Lower leg skin (tissue), 4 donors: ENCODE measurements at regions of chr2 and their contacts with region 1.

Region 1: DNA sequence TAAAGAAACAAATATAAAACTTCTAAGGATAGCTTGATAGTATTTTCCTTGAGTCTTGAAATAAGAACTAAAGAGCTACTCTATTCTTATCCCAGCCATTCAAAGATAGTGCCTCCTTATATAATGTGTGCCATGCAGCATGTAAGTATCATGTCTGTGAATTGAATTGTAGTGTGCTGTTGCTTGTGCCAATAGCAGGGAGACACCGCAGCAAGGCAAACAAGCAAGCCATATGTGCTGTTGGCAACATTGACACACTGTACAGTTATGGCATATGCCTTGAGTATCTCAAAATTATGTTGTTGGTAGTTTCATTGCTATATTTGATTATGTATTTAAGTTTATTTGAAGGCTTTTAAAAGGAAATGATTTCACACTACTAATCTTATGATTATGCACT is 58.2 kb downstream of the ERBB4 start:
- DNase-seq: no peak
- H3K4me3 ChIP-seq: no peak overlapping the region
- CTCF ChIP-seq: no peak
- POLR2A ChIP-seq: no peak

Region 2: GRCh38 chr2:212530373-212530772 is 49.9 kb after region 1 on chr2:
- intact Hi-C with region 1: loop called (anchors 2 kb)
- DNase-seq: no peak
- H3K4me3 ChIP-seq: no peak overlapping the region
- CTCF ChIP-seq: no peak
- POLR2A ChIP-seq: no peak

Region 3: GRCh38 chr2:212974692-212975091 is 494.2 kb after region 1 on chr2:
- intact Hi-C with region 1: no loop called
- DNase-seq: no peak
- H3K4me3 ChIP-seq: no peak overlapping the region
- CTCF ChIP-seq: no peak
- POLR2A ChIP-seq: no peak